KBM-7 (cell line): ENCODE measurements at regions of chr11 and their contacts with region 1.

Region 1: DNA sequence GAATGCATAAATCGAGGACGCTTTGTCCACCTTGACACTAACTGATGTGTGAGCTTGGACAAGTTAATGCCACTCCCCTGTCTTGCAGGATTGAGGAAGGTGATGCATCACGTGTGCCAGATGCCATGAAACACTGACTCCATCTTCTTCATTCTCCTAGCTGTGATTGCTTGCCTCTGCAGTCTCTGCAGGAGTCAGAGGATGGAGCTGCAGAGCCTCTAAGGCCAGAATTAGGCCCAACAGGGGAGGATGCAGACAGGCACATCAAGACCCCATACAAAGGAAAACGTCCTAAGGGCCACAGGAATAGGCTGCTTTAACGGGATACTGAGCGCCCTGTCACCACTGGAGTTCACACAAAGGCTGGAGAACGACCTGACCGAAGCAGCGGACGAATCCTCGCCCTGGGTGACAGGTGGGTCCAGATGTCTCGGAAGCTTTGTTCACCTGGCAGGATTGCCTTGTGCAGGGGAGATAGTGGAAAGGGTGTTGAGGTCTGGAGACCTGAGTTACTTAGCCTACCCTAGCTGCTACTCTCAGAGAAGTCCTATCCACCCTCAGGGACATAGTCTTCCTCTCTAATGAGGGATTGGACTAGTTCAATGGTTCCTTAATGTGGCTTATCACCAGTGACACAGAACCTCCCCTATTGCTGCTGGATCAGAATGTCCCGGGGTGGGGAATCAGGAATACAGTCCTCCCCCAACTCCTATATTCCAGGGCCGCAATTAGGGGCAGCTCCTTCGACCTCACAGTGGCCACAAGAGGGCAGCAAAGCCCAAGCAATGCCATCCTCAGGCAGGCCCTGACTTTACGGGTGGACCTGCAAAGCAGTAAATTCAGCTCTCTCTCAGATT is 32.4 kb downstream of the DBX1 start:
- DNase-seq: peak; percentile 54

Region 2: DNA sequence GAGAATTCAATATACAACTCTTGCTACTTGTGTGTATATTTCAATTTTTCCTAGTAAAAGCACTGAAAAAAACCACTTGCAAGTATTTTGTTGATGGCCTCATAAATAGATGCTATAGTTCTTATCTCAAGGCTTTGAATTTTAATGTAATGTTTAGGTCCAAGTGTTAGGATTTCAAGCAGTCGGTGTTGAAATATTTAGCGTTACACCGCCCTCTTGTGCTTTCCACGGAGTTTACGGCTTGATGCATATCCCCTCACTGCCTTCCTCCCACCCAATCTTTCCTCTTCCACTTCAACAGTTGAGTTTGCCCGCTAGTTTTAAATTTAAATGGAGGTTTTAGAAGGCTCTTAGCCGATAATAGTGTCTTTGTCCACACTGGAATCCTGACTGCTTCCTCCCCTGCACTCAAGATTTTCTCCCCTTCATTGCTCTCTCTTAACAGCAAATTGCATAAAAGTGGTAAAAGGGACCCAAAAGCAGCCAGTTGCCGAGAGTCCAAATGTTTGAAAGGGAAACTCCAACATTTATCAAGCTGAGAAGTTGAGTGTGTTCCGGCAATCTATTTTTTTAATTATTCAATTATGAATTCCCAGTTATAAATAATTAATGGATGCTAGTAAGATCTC is 209.7 kb after region 1 on chr11:
- in situ Hi-C with region 1: loop called (anchors 25 kb)
- DNase-seq: peak; percentile 24